PC-3 (cell line): ENCODE measurements at regions of chr3 and their contacts with region 1.

Region 1: GRCh38 chr3:154151969-154152368 is 30.8 kb downstream of the ARHGEF26 start:
- DNase-seq: peak; percentile 69
- ATAC-seq: peak; percentile 83
- H3K4me3 ChIP-seq: no peak overlapping the region
- H3K27ac ChIP-seq: peak overlapping the region; percentile 27
- H3K4me1 ChIP-seq: peaks cover 13% of the 10 kb centered on the region
- H3K27me3 ChIP-seq: no peaks in the 10 kb centered on the region
- CTCF ChIP-seq: no peak

Region 2: GRCh38 chr3:154120961-154121700 is 30.8 kb before region 1 on chr3 and contains the start of gene ARHGEF26:
- CTCF ChIA-PET with region 1: no interaction called
- POLR2A ChIA-PET with region 1: no interaction called
- intact Hi-C with region 1: loop called (anchors 2 kb)
- DNase-seq: peak; percentile 75
- ATAC-seq: peak; percentile 66
- H3K4me3 ChIP-seq: peak within 1 kb of the TSS; percentile 93
- H3K27ac ChIP-seq: no peak within 1 kb of the TSS
- H3K4me1 ChIP-seq: peaks cover 32% of the 10 kb centered on the region
- H3K27me3 ChIP-seq: no peaks in the 10 kb centered on the region
- CTCF ChIP-seq: no peak
- total RNA-seq, gene ARHGEF26: 4.7 and 5.0 TPM in 2 replicates

Region 3: DNA sequence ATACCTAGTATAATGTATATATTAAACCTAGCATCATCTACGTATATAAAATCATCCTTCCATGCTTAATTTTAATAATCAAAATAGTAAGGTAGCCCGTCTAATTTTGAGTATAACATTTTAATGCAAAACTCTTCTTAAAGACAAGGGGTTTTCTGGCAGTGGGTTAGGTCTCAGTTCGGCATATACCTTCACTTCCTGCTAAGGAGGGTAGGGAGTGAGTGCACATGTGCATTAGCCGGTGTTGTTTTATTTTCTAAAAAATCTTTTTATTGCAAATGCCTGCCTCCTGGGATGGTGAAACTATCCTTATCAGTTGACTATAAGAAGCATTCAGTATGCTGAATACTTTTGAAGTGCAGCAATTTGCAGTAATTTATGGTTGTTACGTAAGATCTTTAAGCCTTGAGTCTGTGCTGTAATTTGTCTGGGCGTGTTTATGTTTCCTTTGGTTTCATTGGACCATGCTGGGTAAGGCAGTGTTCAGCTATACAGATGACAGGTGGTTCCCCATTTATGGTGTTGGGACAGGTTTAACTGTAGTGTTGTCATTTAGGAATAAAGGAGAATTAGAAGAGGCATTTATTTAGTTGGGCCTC is 19.1 kb before region 1 on chr3:
- CTCF ChIA-PET with region 1: no interaction called
- POLR2A ChIA-PET with region 1: no interaction called
- intact Hi-C with region 1: no loop called
- DNase-seq: no peak
- ATAC-seq: no peak
- H3K4me3 ChIP-seq: no peak overlapping the region
- H3K27ac ChIP-seq: no peak overlapping the region
- H3K4me1 ChIP-seq: no peaks in the 10 kb centered on the region
- H3K27me3 ChIP-seq: no peaks in the 10 kb centered on the region
- CTCF ChIP-seq: no peak